Activated CD8-positive, alpha-beta T cell treated with anti-CD3 and anti-CD28 coated beads for 36 hours (primary cell): ENCODE measurements at regions of chr6 and their contacts with region 1.

Region 1: GRCh38 chr6:33248925-33249731 is 22.5 kb downstream of the VPS52 start:
- DNase-seq: peak; percentile 99
- ATAC-seq: peak; percentile 91
- H3K4me3 Mint-ChIP-seq: peak overlapping the region; percentile 92
- H3K27ac Mint-ChIP-seq: peak overlapping the region; percentile 97
- H3K4me1 Mint-ChIP-seq: peaks cover 34% of the 10 kb centered on the region
- H3K27me3 Mint-ChIP-seq: no peaks in the 10 kb centered on the region
- CTCF ChIP-seq: no peak

Region 2: DNA sequence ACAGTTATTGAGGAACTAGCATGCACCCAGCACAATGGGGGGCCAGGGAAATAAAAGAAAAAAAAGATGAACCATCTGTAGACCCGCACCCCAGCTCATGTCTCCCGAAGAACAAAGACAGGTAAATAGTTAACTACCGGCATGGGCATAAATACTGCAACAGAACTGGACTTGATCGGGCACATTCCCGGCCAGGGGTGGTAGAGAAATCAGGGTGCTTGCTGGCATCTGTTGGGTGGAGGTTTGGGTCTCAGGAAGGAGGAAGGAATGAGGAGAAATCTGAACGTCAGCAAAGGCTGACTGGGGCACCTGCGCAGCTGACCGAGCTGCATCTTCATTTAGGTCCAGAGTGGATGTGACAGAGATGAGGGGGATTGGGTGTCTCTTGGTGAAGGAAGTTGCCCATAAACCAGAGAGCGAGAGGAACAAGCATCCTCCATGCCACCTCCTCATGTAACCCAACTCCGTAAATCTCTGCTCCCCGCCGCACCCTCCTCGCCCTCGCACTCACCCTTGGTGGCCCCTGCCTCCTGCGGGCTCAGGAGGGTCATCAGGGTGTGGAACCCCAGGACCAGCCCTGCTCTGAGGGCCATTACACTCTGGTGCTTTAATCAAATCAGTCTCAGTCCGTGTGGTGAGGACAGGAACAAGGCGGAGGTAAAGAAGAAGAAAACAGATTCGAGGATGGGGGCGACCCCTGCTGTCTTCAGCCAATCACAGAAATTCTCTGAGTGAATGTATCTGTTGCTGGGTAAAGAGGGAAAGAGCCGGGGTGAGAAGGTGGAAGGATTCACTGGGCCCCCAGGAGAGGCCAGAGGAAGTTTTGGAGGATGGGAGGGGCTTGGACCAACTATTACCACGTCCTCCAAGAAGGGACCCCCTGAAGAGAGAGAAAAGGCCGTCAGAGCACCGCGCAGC is 239.9 kb before region 1 on chr6 and contains the start of gene HLA-DOA:
- CTCF ChIA-PET with region 1: interaction called, 8 read pairs
- POLR2A ChIA-PET with region 1: no interaction called
- intact Hi-C with region 1: loop called (anchors 10 kb)
- DNase-seq: peak; percentile 83
- ATAC-seq: peak; percentile 99
- H3K4me3 Mint-ChIP-seq: peak within 1 kb of the TSS; percentile 84
- H3K27ac Mint-ChIP-seq: peak within 1 kb of the TSS; percentile 81
- H3K4me1 Mint-ChIP-seq: peaks cover 24% of the 10 kb centered on the region
- H3K27me3 Mint-ChIP-seq: no peaks in the 10 kb centered on the region
- CTCF ChIP-seq: no peak
- total RNA-seq, gene HLA-DOA: 6.4 to 8.1 TPM

Region 3: GRCh38 chr6:33147807-33148666 is 101.1 kb before region 1 on chr6:
- CTCF ChIA-PET with region 1: interaction called, 22 read pairs
- POLR2A ChIA-PET with region 1: no interaction called
- intact Hi-C with region 1: no loop called
- DNase-seq: no peak
- ATAC-seq: no peak
- H3K4me3 Mint-ChIP-seq: no peak overlapping the region
- H3K27ac Mint-ChIP-seq: no peak overlapping the region
- H3K4me1 Mint-ChIP-seq: no peaks in the 10 kb centered on the region
- H3K27me3 Mint-ChIP-seq: peaks cover 18% of the 10 kb centered on the region
- CTCF ChIP-seq: peak; percentile 78

Region 4: DNA sequence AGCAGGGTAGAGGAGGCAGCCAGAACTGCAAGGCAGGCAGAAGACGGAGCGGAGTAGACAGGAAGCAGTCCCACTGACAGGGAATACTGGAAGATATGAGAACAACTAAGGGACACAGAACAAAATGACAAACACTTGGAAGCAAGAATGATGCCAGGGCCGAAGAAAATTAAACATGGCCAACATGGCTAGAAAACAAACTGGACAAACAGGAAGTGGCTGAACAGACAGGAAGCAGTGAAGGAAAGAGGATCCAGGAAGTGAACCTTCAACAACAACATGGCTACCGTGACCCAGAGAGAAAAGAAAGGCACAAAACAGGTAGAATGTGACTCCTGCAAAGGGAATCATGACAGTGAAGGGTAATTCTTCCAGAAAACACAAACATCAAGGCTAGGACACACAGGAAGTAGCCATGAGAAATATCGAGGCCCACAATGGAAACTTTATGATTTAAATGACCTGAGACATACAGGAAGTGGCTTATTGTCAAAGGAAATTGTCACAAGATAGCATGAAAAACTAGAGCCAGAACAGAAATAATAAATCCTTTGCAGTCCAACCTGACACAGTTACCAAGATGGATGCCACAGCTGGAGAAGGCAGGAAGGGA is 66.0 kb before region 1 on chr6:
- CTCF ChIA-PET with region 1: interaction called, 11 read pairs
- POLR2A ChIA-PET with region 1: interaction called, 3 read pairs
- intact Hi-C with region 1: no loop called
- DNase-seq: no peak
- ATAC-seq: peak; percentile 54
- H3K4me3 Mint-ChIP-seq: peak overlapping the region; percentile 53
- H3K27ac Mint-ChIP-seq: peak overlapping the region; percentile 99
- H3K4me1 Mint-ChIP-seq: peaks cover 19% of the 10 kb centered on the region
- H3K27me3 Mint-ChIP-seq: peaks cover 2% of the 10 kb centered on the region
- CTCF ChIP-seq: no peak

Region 5: DNA sequence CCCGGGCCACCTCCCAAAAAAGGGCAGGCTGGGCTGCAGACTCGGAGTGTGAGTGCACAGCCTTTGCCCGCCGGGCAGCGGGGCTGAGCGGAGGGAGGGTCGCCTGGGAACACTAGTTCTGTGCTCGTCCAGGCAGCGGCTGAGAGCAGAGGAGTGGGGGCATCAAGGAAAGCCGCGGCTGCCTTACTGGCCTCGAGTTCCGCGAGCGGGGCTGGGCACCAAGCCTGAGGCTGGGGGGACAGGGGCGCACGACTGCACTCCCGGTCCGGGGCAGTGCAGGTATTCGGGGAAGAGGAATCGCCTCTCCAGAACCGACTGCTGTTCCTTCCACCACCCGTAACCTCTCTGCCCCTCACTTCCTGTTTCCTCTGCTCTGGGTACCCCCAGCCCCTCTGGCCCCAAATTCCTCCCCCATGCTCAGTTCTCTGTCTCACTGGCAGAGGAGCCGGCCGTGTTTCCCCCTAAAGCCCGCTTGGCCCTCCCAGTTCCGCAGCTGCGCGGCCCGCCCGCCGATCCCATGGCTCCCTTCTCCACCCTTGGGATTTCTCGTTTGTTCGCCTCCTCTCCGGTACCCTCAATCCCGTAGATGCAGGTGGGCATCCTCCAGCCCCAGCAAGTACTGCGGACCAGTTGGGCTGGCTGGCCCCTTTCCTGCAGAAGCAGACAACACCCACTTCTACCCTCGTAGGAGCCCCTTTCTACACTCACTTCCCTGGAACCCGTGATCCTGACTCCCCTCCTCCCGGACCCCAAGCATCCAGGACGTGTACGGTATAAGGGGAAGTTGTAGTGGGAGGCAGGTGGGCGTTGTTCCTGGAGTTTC is 35.8 kb before region 1 on chr6:
- CTCF ChIA-PET with region 1: interaction called, 22 read pairs
- POLR2A ChIA-PET with region 1: interaction called, 37 read pairs
- intact Hi-C with region 1: loop called (anchors 5 kb)
- DNase-seq: peak; percentile 54
- ATAC-seq: peak; percentile 34
- H3K4me3 Mint-ChIP-seq: peak overlapping the region; percentile 75
- H3K27ac Mint-ChIP-seq: peak overlapping the region; percentile 37
- H3K4me1 Mint-ChIP-seq: peaks cover 72% of the 10 kb centered on the region
- H3K27me3 Mint-ChIP-seq: no peaks in the 10 kb centered on the region
- CTCF ChIP-seq: no peak

Region 6: DNA sequence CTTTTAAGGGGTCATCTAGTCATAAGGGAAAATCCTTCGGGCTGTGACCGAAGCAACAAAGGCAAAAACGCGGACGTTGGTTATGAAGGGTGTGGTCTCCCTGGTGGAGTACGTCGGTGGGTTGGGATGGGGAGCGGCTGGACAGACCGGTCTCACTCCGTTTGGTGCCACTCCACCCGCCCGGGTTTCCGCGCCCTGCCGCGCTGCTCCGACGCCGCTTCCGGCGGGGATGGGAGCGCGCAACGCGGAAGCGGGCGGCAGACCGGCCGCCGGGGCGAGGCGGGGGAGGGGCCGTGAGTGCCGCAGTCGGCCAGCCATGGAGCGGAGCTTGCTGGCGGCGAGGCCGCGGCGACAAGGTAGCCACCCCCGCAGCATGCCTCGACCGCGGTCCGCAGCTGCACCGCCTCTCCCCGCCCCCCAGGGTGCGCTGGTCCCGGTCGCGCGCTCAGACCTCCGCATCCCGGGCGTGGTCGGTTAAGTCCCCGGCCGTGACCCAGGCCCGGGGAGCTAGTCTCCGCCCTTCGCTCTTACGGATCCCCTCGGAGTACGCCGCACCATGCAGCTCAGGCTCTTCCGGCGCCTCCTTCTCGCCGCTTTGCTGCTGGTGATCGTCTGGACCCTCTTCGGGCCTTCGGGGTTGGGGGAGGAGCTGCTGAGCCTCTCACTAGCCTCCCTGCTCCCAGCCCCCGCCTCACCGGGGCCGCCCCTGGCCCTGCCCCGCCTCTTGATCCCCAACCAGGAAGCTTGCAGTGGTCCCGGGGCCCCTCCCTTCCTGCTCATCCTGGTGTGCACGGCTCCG is 27.9 kb after region 1 on chr6 and contains the start of gene B3GALT4:
- CTCF ChIA-PET with region 1: interaction called, 36 read pairs
- POLR2A ChIA-PET with region 1: interaction called, 53 read pairs
- intact Hi-C with region 1: no loop called
- DNase-seq: peak; percentile 82
- ATAC-seq: peak; percentile 76
- H3K4me3 Mint-ChIP-seq: peak within 1 kb of the TSS; percentile 95
- H3K27ac Mint-ChIP-seq: peak within 1 kb of the TSS; percentile 100
- H3K4me1 Mint-ChIP-seq: peaks cover 38% of the 10 kb centered on the region
- H3K27me3 Mint-ChIP-seq: no peaks in the 10 kb centered on the region
- CTCF ChIP-seq: peak; percentile 44
- total RNA-seq, gene B3GALT4: 3.6 to 4.2 TPM